ENCODE measurements at regions of chr6 and their contacts with region 1.

Region 1: GRCh38 chr6:46090115-46091079 is 39.4 kb upstream of the ENPP4 start:
- DNase-seq: peak; percentile 32
- ATAC-seq: peak; percentile 67
- H3K4me3 Mint-ChIP-seq: no peak overlapping the region
- H3K27ac Mint-ChIP-seq: no peak overlapping the region
- H3K4me1 Mint-ChIP-seq: peaks cover 5% of the 10 kb centered on the region
- H3K27me3 Mint-ChIP-seq: peaks cover 11% of the 10 kb centered on the region
- CTCF ChIP-seq: no peak

Region 2: GRCh38 chr6:44475779-44476434 is 1614.5 kb before region 1 on chr6:
- CTCF ChIA-PET with region 1: no interaction called
- POLR2A ChIA-PET with region 1: no interaction called
- intact Hi-C with region 1: loop called (anchors 1 kb)
- DNase-seq: peak; percentile 52
- ATAC-seq: peak; percentile 73
- H3K4me3 Mint-ChIP-seq: no peak overlapping the region
- H3K27ac Mint-ChIP-seq: no peak overlapping the region
- H3K4me1 Mint-ChIP-seq: no peaks in the 10 kb centered on the region
- H3K27me3 Mint-ChIP-seq: peaks cover 7% of the 10 kb centered on the region
- CTCF ChIP-seq: peak; percentile 43

Region 3: DNA sequence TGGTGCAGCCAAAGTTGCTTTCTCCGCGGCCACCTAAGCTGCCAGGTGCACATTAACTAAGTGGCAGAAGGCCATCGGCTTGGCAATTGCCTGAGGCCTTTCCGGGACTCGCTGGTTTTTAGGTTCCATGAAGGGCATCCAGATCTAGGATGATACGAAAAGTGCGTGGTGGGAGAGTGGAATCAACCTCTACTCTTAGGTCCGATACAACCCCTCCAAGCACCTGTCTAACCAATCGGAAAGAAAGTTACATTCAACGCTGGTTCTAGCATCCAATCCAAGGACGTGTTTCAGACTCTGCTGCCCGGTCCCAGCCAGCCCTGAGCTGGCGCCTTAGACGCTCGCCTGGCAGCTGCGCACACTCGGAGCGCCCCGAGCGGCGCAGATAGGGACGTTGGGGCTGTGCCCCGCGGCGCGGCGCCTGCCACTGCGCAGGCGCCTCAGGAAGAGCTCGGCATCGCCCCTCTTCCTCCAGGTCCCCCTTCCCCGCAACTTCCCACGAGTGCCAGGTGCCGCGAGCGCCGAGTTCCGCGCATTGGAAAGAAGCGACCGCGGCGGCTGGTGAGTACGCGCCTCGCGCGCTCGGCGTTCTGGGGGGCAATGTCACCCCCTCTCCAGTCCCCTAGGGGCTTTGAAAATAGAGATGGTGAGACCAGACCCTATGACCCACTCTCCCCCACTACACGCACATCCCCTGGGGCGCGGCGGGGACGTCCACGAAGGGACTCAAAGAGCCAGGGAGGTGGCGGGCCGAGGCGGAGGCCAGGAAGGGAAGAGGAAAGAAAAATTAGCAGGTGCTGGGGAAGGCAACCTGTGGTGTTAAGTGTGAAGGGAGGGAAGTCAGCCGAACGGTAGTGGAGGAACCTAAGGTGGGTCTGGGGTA is 39.5 kb after region 1 on chr6 and contains the start of gene ENPP4:
- CTCF ChIA-PET with region 1: interaction called, 17 read pairs
- POLR2A ChIA-PET with region 1: interaction called, 3 read pairs
- intact Hi-C with region 1: loop called (anchors 2 kb)
- DNase-seq: peak; percentile 76
- ATAC-seq: peak; percentile 99
- H3K4me3 Mint-ChIP-seq: peak within 1 kb of the TSS; percentile 95
- H3K27ac Mint-ChIP-seq: peak within 1 kb of the TSS; percentile 87
- H3K4me1 Mint-ChIP-seq: peaks cover 48% of the 10 kb centered on the region
- H3K27me3 Mint-ChIP-seq: no peaks in the 10 kb centered on the region
- CTCF ChIP-seq: no peak
- total RNA-seq, gene ENPP4: 13.0 and 13.6 TPM in 2 replicates

Region 4: DNA sequence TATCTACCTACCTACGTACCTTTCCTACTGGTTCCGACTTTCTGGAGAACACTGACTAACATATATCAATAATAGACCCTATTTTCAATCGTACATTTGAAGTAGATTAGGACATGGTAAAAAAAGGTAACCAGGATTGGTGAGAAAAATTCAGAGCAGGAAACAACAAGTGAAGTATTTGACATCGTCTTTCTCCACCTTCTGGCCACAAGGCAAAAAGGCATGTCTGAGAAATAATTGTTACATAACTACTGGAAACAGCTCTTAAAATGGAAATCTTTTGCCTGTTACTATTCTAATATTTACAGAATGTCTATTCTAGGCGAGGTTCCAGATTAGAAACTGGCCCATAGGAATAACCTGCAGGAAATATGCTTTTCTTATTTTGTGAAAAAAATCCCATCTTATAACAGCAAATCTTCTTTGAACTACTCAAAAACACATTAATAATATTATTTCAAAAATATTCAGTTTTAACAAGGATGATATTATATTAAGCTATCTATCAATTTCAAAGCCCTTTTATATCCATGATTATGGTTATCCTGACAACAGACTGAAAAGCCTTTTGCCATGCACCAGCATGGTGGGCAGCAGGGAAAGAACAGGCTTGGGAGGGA is 320.0 kb after region 1 on chr6:
- CTCF ChIA-PET with region 1: interaction called, 203 read pairs
- POLR2A ChIA-PET with region 1: interaction called, 4 read pairs
- intact Hi-C with region 1: loop called (anchors 1 kb)
- DNase-seq: no peak
- ATAC-seq: peak; percentile 47
- H3K4me3 Mint-ChIP-seq: no peak overlapping the region
- H3K27ac Mint-ChIP-seq: no peak overlapping the region
- H3K4me1 Mint-ChIP-seq: no peaks in the 10 kb centered on the region
- H3K27me3 Mint-ChIP-seq: no peaks in the 10 kb centered on the region
- CTCF ChIP-seq: peak; percentile 44

Region 5: DNA sequence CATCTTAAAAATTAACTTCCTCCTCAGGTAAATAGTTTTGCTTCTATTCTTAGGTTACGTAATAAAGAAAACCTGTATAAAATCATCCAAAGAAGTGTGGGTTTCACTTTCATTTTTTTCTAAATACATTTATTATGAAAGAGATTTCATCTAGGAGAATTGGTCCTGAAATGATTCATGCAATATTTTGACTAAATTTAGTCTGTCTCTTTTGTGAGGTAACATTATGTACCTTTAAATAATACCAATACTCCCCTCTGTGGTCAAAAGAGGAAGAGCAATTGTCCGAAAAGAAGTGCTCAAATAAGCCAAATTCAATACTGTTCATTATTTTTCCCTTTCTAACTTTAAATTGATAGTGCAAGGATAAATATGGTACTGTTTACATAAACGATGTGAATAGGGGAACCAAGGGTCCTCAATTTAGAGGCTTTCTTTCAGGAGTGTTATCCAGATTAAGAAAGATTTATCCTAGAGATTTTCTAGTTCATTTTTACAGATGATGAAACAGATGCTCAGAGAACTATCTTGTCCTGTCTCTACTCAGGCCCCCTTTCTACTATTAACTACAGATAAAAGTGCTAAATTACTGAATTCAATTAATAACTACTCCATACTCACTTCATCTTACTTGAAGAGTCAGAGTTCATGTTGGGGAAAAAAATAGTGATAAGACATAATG is 536.0 kb after region 1 on chr6:
- CTCF ChIA-PET with region 1: no interaction called
- POLR2A ChIA-PET with region 1: no interaction called
- intact Hi-C with region 1: loop called (anchors 1 kb)
- DNase-seq: no peak
- ATAC-seq: peak; percentile 54
- H3K4me3 Mint-ChIP-seq: no peak overlapping the region
- H3K27ac Mint-ChIP-seq: no peak overlapping the region
- H3K4me1 Mint-ChIP-seq: peaks cover 7% of the 10 kb centered on the region
- H3K27me3 Mint-ChIP-seq: peaks cover 4% of the 10 kb centered on the region
- CTCF ChIP-seq: no peak

Region 6: GRCh38 chr6:47047479-47048407 is 957.3 kb after region 1 on chr6:
- CTCF ChIA-PET with region 1: no interaction called
- POLR2A ChIA-PET with region 1: no interaction called
- intact Hi-C with region 1: loop called (anchors 5 kb)
- DNase-seq: no peak
- ATAC-seq: no peak
- H3K4me3 Mint-ChIP-seq: no peak overlapping the region
- H3K27ac Mint-ChIP-seq: no peak overlapping the region
- H3K4me1 Mint-ChIP-seq: no peaks in the 10 kb centered on the region
- H3K27me3 Mint-ChIP-seq: peaks cover 7% of the 10 kb centered on the region
- CTCF ChIP-seq: no peak

Region 7: GRCh38 chr6:47360388-47360787 is 1270.0 kb after region 1 on chr6:
- CTCF ChIA-PET with region 1: no interaction called
- POLR2A ChIA-PET with region 1: no interaction called
- intact Hi-C with region 1: no loop called
- DNase-seq: no peak
- ATAC-seq: no peak
- H3K4me3 Mint-ChIP-seq: no peak overlapping the region
- H3K27ac Mint-ChIP-seq: no peak overlapping the region
- H3K4me1 Mint-ChIP-seq: peaks cover 32% of the 10 kb centered on the region
- H3K27me3 Mint-ChIP-seq: no peaks in the 10 kb centered on the region
- CTCF ChIP-seq: no peak

Measured in activated B cell treated with CpG ODN at 0.5 μM for 24 hours (primary cell).